Cardiac septum (tissue), 1 donor: ENCODE measurements at regions of chr9 and their contacts with region 1.

Region 1: GRCh38 chr9:113095561-113095960 is 39.0 kb upstream of the ZFP37 start:
- DNase-seq: no peak

Region 2: DNA sequence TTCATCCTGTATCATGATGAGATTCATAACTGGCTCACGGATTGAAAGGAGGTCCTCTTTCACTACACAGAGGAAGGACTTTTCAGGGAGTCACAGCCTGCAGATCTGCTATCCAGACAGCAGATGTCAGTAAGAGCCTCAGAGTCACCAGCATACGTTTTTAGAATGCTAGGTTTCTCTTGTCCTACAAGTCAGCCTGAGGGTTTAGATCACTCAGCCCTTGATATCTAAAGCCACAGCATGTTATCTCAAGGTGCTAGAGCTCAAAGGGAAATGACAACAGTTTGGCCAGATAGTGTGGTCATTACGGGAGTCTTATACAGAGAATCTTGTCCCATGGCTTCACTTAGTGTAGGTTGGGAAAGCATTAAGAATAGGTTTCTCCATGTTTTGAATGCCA is 174.0 kb before region 1 on chr9:
- intact Hi-C with region 1: loop called (anchors 10 kb)
- DNase-seq: no peak